Endothelial cell of umbilical vein (primary cell): ENCODE measurements at regions of chr16 and their contacts with region 1.

Region 1: GRCh38 chr16:56356276-56357240 is 68.8 kb downstream of the AMFR start:
- DNase-seq: peak; percentile 88
- H3K4me3 ChIP-seq: peak overlapping the region; percentile 22 to 60 (median 56)
- H3K27ac ChIP-seq: peak overlapping the region; percentile 87
- H3K4me1 ChIP-seq: peaks cover 14% of the 10 kb centered on the region
- H3K27me3 ChIP-seq: peaks cover 0 to 3% of the 10 kb centered on the region in 2 experiments
- CTCF ChIP-seq: peak; percentile 92 to 93
- POLR2A ChIP-seq: no peak

Region 2: DNA sequence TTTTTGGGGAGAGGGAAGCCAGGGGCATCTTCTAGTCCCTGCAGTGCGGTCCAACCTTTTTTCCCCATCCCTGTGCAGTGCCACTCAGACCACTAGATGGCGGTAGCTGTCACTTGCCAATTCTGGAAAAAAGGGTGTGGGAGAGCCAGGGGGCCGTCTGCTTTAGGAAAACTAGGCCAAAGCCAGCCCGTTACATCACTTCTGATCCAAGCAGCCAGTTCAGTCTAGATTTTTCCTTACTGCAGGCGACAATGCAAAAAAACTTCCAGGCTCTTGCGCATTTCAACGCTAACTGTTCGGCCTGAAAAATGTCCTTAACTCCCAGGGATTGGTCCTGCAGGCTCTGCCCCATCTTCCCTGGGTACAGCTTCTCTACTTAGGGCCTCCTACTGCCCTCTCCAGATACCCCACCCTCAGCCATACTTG is 412.2 kb before region 1 on chr16:
- CTCF ChIA-PET with region 1: interaction called, 9 read pairs
- POLR2A ChIA-PET with region 1: no interaction called
- dilution Hi-C with region 1: no loop called
- intact Hi-C with region 1: loop called (anchors 1 kb)
- DNase-seq: peak; percentile 41
- H3K4me3 ChIP-seq: no peak overlapping the region
- H3K27ac ChIP-seq: no peak overlapping the region
- H3K4me1 ChIP-seq: no peaks in the 10 kb centered on the region
- H3K27me3 ChIP-seq: no peaks in the 10 kb centered on the region
- CTCF ChIP-seq: peak; percentile 90 to 92
- POLR2A ChIP-seq: no peak

Region 3: DNA sequence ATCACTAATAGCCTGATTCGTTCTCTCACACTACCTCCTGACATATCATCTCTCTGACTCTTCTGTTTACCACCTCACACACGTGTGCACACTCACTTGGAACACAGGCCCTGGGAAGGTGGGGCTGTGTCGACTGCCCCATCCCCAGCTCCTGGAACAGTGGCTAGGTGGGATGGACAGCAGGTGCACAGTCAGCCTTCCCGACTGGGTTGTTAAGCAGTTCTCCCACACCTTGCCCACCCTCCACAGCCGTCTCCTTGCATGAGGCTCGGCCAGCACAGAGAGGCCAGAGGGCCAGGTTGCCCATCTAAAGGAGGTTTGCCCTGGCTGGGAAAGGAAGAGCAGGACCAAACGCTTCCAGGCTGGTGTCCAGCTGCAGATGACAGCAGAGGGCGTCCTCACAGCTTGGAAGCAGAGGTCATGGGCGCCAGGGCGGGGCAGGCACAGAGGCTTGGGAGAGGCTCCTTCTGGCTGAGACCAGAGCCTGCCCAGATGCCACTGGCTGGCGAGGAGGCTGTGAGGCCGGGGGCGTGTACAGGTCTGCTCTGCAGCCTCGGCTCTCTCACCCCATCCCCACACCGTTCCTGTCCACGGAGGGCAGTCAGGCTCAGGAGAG is 24.0 kb before region 1 on chr16:
- CTCF ChIA-PET with region 1: interaction called, 25 read pairs
- POLR2A ChIA-PET with region 1: no interaction called
- dilution Hi-C with region 1: no loop called
- intact Hi-C with region 1: loop called (anchors 1 kb)
- DNase-seq: peak; percentile 35
- H3K4me3 ChIP-seq: no peak overlapping the region
- H3K27ac ChIP-seq: no peak overlapping the region
- H3K4me1 ChIP-seq: no peaks in the 10 kb centered on the region
- H3K27me3 ChIP-seq: no peaks in the 10 kb centered on the region
- CTCF ChIP-seq: peak in 1 of 2 donors; percentile 60
- POLR2A ChIP-seq: no peak

Region 4: GRCh38 chr16:56370877-56371659 is 14.5 kb after region 1 on chr16:
- CTCF ChIA-PET with region 1: interaction called, 11 read pairs
- POLR2A ChIA-PET with region 1: no interaction called
- dilution Hi-C with region 1: no loop called
- intact Hi-C with region 1: no loop called
- DNase-seq: peak; percentile 51
- H3K4me3 ChIP-seq: no peak overlapping the region
- H3K27ac ChIP-seq: no peak overlapping the region
- H3K4me1 ChIP-seq: peaks cover 16% of the 10 kb centered on the region
- H3K27me3 ChIP-seq: no peaks in the 10 kb centered on the region
- CTCF ChIP-seq: no peak
- POLR2A ChIP-seq: no peak

Region 5: GRCh38 chr16:56450986-56451752 is 94.6 kb after region 1 on chr16 and contains the starts of genes NUDT21 and OGFOD1:
- CTCF ChIA-PET with region 1: interaction called, 3 read pairs
- POLR2A ChIA-PET with region 1: no interaction called
- dilution Hi-C with region 1: no loop called
- intact Hi-C with region 1: loop called (anchors 1 kb)
- DNase-seq: peak; percentile 98
- H3K4me3 ChIP-seq: peak within 1 kb of the TSS; percentile 80 to 99 (median 84)
- H3K27ac ChIP-seq: peak within 1 kb of the TSS; percentile 50
- H3K4me1 ChIP-seq: peaks cover 30% of the 10 kb centered on the region
- H3K27me3 ChIP-seq: no peaks in the 10 kb centered on the region
- CTCF ChIP-seq: no peak
- POLR2A ChIP-seq: peak; percentile 75
- total RNA-seq, gene NUDT21: 155 and 158 TPM in 2 replicates
- total RNA-seq, gene OGFOD1: 52.3 and 54.8 TPM in 2 replicates